ENCODE measurements at regions of chr15 and their contacts with region 1.

Region 1: DNA sequence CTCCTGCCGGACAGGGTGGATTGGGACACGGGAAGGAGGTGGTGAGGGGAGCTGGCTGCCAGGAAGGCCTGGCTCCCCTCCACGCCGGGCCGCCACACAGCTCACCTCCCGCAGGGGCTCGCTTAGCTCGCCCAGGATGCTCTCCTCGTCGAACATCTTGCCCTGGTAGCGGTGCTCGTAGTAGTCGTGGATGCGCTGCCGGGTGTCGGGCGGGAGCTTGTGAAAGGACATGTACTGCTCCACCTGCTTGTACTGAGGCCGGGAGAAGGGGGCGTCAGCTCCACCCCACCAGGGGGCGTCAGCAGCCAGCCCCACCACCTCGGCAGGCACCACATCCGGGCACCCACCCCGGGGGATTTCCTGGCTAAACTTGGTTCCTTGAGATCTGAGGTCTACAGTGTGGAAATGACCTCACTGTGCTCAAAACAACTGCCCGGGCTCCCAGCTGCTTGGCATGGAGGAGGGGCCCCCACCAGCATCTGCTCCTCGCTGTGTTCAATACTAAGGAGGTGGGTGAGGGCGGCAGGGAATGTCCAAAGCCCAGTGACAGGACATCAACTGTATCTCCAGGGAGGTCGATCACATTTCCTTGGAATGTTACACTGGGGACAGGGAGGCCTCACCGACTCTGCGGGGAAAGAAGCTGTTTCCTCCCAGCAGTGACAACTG is 43.4 kb downstream of the HCN4 start:
- DNase-seq: peak in 1 of 2 donors; percentile 57
- ATAC-seq: no peak
- H3K4me3 ChIP-seq: no peak overlapping the region
- H3K27ac ChIP-seq: no peak overlapping the region
- H3K4me1 ChIP-seq: no peaks in the 10 kb centered on the region
- H3K27me3 ChIP-seq: no peaks in the 10 kb centered on the region

Region 2: DNA sequence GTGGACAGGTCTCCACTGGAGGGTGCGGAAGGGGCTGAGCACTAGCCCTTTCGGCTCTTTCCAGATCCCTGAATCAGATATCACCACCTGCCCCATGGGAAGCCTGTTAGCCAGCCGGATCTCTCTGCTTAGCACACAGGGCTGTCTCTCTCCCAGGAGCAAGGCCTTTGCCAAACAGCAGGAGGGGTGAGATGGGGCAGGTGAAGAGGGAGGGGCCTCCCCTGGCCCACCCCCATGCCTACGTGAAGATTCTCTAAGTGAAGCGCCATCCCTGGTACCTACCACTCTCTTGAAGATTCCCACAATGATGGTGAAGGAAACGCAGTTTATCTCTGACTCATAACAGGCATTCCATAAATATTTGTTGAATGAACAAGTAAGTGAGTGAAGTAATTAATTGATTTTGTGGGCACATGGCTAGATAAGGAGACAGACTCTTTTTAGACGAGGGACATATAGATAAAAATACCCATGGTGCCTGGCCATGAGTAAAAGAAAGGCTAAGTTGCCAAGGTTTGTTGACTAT is 63.0 kb after region 1 on chr15:
- intact Hi-C with region 1: loop called in 1 of 2 experiments (anchors 10 kb)
- DNase-seq: no peak
- ATAC-seq: no peak
- H3K4me3 ChIP-seq: no peak overlapping the region
- H3K27ac ChIP-seq: no peak overlapping the region
- H3K4me1 ChIP-seq: no peaks in the 10 kb centered on the region
- H3K27me3 ChIP-seq: no peaks in the 10 kb centered on the region

Region 3: GRCh38 chr15:73844356-73844755 is 519.0 kb after region 1 on chr15:
- intact Hi-C with region 1: no loop called
- DNase-seq: no peak
- ATAC-seq: no peak
- H3K4me3 ChIP-seq: no peak overlapping the region
- H3K27ac ChIP-seq: no peak overlapping the region
- H3K4me1 ChIP-seq: no peaks in the 10 kb centered on the region
- H3K27me3 ChIP-seq: no peaks in the 10 kb centered on the region

Measured in aorta (tissue), 5 donors.